Calu3 (cell line): ENCODE measurements at regions of chr2 and their contacts with region 1.

Region 1: GRCh38 chr2:67455219-67456142 is 58.3 kb downstream of the ETAA1 start:
- DNase-seq: no peak
- H3K4me3 Mint-ChIP-seq: peak overlapping the region; percentile 36
- H3K27ac Mint-ChIP-seq: peak overlapping the region; percentile 52
- H3K4me1 Mint-ChIP-seq: peaks cover 68% of the 10 kb centered on the region
- H3K27me3 Mint-ChIP-seq: no peaks in the 10 kb centered on the region
- CTCF ChIP-seq: no peak

Region 2: GRCh38 chr2:67397143-67397986 is 58.1 kb before region 1 on chr2 and contains the start of gene ETAA1:
- CTCF ChIA-PET with region 1: no interaction called
- intact Hi-C with region 1: loop called (anchors 2 kb)
- DNase-seq: peak; percentile 93
- H3K4me3 Mint-ChIP-seq: peak within 1 kb of the TSS; percentile 88
- H3K27ac Mint-ChIP-seq: peak within 1 kb of the TSS; percentile 90
- H3K4me1 Mint-ChIP-seq: peaks cover 36% of the 10 kb centered on the region
- H3K27me3 Mint-ChIP-seq: no peaks in the 10 kb centered on the region
- CTCF ChIP-seq: no peak
- total RNA-seq, gene ETAA1: 12.2 and 12.6 TPM in 2 replicates

Region 3: GRCh38 chr2:68134554-68134953 is 679.1 kb after region 1 on chr2:
- CTCF ChIA-PET with region 1: no interaction called
- intact Hi-C with region 1: no loop called
- DNase-seq: no peak
- H3K4me3 Mint-ChIP-seq: no peak overlapping the region
- H3K27ac Mint-ChIP-seq: no peak overlapping the region
- H3K4me1 Mint-ChIP-seq: no peaks in the 10 kb centered on the region
- H3K27me3 Mint-ChIP-seq: no peaks in the 10 kb centered on the region
- CTCF ChIP-seq: no peak